PC-9 (cell line): ENCODE measurements at regions of chr4 and their contacts with region 1.

Region 1: DNA sequence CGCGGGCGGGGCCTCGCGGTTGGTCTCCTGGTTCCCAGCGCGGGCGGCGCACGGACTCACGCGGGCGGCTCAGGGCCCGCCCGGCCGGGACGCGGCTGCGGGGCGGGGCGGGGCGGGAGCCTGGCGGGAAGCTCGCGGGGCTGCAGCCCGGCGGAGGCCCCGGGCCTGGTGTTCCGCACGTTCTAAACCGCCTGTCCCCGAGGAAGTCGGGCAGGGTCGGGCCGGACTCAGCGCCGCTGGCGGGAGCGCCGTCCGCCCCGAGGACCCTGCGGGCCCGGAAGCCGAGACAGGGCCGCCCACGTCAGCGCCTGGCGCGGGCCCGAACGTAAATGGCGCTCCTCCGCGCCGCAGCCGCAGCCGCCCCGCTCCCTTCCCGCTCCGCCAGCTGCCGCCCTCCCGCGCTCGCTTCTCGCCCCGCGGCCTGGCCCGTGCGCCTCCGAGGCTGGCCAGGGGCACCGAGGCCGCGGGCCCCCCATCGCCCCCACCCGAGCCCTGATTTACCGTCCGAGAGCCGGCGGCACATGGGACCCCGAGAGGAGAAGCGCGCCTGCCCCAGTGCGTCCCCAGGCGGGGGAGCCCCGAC is 309 bp upstream of the CTBP1 start:
- DNase-seq: peak; percentile 48 to 81
- H3K4me3 ChIP-seq: peak overlapping the region; percentile 83
- H3K27ac ChIP-seq: peak overlapping the region; percentile 56
- H3K4me1 ChIP-seq: peaks cover 24% of the 10 kb centered on the region
- H3K27me3 ChIP-seq: no peaks in the 10 kb centered on the region
- CTCF ChIP-seq: no peak

Region 2: DNA sequence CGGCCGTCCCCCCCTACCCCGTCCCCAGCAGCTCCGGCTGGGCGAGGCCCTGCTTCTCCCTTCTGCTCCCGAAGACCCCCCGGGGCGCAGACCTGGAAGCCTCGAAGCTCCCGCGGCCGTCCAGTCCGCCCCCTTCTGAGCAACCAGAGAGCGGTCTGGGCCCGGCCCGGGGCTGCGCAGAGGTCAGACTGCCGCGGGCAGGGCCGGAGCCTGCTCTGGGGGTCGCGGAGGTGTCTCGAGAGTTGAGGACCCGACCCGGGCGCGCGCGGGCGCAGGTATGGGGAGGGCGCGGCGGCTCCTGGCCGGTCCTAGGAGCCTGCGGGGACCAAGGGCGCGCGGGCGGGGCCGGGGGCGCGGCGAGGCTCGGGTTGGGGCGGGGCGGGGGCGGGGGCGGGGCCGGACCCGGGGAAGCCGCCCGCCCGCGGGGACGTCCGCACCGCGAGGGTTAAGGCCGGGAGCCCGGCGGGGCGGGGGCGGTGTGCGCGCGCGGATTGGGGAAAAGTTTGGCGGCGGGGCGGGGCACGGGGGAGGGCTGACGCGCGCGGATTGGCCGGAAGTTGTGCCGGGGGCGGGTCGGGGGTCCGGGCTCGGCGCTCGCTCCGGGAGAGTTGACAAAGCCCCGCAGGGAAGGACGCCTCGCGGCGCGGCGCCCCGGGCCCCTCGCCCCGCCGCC is 238.1 kb before region 1 on chr4 and contains the start of gene FGFRL1:
- CTCF ChIA-PET with region 1: no interaction called
- POLR2A ChIA-PET with region 1: no interaction called
- intact Hi-C with region 1: loop called (anchors 5 kb)
- DNase-seq: peak; percentile 73 to 92
- H3K4me3 ChIP-seq: peak within 1 kb of the TSS; percentile 90
- H3K27ac ChIP-seq: peak within 1 kb of the TSS; percentile 55
- H3K4me1 ChIP-seq: peaks cover 5% of the 10 kb centered on the region; the same call in 1 of the 2 replicates
- H3K27me3 ChIP-seq: peaks cover 11% of the 10 kb centered on the region; the same call in 1 of the 2 replicates
- CTCF ChIP-seq: no peak
- total RNA-seq, gene FGFRL1: 59.5 and 61.6 TPM in 2 replicates

Region 3: GRCh38 chr4:1130316-1131186 is 118.7 kb before region 1 on chr4:
- CTCF ChIA-PET with region 1: no interaction called
- POLR2A ChIA-PET with region 1: no interaction called
- intact Hi-C with region 1: loop called (anchors 5 kb)
- DNase-seq: peak; percentile 60 to 63
- H3K4me3 ChIP-seq: no peak overlapping the region
- H3K27ac ChIP-seq: no peak overlapping the region
- H3K4me1 ChIP-seq: no peaks in the 10 kb centered on the region
- H3K27me3 ChIP-seq: peaks cover 22% of the 10 kb centered on the region; the same call in 1 of the 2 replicates
- CTCF ChIP-seq: peak; percentile 99

Region 4: GRCh38 chr4:1167247-1167949 is 81.8 kb before region 1 on chr4:
- CTCF ChIA-PET with region 1: no interaction called
- POLR2A ChIA-PET with region 1: no interaction called
- intact Hi-C with region 1: loop called (anchors 5 kb)
- DNase-seq: peak; percentile 64 to 77
- H3K4me3 ChIP-seq: peak overlapping the region; percentile 54; the same call in 1 of the 2 replicates
- H3K27ac ChIP-seq: no peak overlapping the region
- H3K4me1 ChIP-seq: no peaks in the 10 kb centered on the region
- H3K27me3 ChIP-seq: peaks cover 7% of the 10 kb centered on the region
- CTCF ChIP-seq: peak; percentile 83

Region 5: DNA sequence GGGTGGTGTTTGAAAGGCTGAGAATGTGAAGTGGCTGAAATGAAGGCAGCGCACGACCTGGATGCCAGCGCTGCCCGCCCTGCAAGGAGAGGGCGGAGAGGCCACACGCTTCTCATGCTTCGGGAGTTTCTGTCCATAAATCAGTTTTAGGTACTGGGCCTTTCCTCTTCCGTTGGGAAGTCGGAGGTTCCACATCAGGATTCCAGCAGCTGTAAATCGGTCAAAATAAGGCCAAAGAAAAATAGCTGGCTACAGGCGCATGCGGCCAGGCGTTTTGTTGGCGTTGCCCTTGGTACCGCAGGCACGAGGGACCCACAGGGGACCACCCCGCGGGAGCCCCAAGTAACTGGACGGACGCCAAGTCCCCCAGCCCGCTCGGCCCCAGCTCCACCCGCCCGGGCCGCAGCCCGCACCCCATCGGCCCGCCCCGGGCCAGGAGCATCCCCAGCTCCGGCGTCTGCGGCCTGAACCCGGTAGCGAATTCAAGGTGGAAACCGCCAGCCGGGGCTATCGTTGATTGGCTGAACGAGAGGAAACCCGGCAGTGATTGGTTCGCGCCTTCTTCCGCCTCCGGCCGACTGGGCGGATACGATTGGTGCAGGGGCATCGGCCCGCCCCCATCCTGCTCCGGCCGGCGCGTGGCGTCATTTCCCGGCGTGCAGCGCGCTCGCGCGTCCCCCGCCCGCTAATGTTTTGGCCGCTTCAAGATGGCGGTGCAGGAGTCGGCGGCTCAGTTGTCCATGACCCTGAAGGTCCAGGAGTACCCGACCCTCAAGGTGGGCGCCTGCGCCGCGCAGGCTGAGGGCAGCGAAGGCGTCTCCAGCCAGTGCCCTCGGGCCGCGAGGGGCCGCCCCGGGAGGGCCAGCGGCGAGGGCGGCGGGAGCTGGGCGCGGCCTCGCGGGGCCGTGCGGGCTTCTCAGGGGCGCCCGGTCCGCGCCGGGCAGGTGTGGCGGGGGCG is 40.2 kb after region 1 on chr4 and contains the start of gene MAEA:
- CTCF ChIA-PET with region 1: no interaction called
- POLR2A ChIA-PET with region 1: no interaction called
- intact Hi-C with region 1: loop called (anchors 5 kb)
- DNase-seq: peak; percentile 90 to 97
- H3K4me3 ChIP-seq: peak within 1 kb of the TSS; percentile 77
- H3K27ac ChIP-seq: peak within 1 kb of the TSS; percentile 53
- H3K4me1 ChIP-seq: peaks cover 27% of the 10 kb centered on the region
- H3K27me3 ChIP-seq: no peaks in the 10 kb centered on the region
- CTCF ChIP-seq: no peak
- total RNA-seq, gene MAEA: 79.4 and 88.6 TPM in 2 replicates